ENCODE measurements at regions of chr20 and their contacts with region 1.

Region 1: DNA sequence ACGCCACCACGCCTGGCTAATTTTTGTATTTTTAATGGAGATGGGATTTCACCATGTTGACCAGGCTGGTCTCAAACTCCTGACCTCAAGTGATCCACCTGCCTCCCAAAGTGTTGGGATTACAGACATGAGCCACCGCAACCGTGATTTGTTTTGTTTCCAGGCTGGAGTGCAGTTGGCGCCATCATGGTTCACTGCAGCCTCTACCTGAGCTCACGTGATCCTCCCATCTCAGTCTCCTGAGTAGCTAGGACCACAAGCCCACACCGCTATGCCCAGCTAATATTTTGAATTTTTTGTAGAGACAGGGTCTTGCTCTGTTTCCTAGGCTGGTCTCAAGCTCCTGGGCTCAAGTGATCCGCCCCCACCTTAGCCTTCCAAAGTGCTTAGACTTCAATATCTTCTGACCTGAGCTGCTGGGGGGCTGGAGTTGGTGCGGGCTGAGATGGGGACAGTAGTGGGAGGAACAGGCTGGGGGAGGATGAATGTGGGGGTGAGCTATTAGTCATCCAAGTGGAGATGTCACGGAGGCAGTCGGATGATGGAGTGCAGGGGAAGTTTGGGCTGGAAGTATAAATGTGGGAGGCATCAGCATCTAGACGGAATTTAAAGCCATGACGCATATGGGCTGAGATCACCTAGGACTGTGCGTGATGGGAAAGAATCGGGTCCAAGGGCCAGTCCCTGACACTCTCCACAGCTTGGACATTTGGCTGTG is 23.1 kb upstream of the ZMYND8 start:
- DNase-seq: peak in 1 of 2 donors; percentile 58
- H3K4me3 ChIP-seq: no peak overlapping the region
- H3K27ac ChIP-seq: no peak overlapping the region
- H3K4me1 ChIP-seq: peaks cover 5 to 18% (median 12%) of the 10 kb centered on the region in 4 donors
- H3K27me3 ChIP-seq: no peaks in the 10 kb centered on the region
- CTCF ChIP-seq: no peak
- EP300 ChIP-seq: no peak
- POLR2A ChIP-seq: no peak

Region 2: DNA sequence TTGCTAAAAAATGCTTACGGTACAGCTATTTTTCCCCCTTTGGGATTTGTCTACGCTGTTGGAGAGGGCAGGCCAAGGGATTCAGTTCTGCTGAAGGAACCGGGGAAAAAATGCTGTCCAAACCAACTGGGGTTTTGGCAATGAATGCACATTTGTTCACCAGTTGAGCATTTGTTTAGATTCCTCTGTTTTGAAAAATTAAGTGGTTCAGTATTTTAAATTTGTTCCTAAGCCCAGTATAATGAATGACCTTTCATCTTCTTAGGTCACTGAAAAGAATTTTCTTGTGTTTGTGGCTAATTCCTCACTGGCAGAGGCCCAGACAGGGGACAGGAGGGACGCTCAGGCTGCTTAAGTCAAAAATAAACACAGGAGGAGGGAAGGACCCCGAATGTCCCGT is 495.7 kb before region 1 on chr20:
- intact Hi-C with region 1: no loop called
- DNase-seq: peak in 1 of 2 donors; percentile 30
- H3K4me3 ChIP-seq: no peak overlapping the region
- H3K27ac ChIP-seq: no peak overlapping the region
- H3K4me1 ChIP-seq: peaks cover 0 to 9% (median 0%) of the 10 kb centered on the region in 4 donors
- H3K27me3 ChIP-seq: peaks cover 0 to 8% (median 0%) of the 10 kb centered on the region in 3 donors
- CTCF ChIP-seq: no peak
- EP300 ChIP-seq: no peak
- POLR2A ChIP-seq: no peak

Region 3: DNA sequence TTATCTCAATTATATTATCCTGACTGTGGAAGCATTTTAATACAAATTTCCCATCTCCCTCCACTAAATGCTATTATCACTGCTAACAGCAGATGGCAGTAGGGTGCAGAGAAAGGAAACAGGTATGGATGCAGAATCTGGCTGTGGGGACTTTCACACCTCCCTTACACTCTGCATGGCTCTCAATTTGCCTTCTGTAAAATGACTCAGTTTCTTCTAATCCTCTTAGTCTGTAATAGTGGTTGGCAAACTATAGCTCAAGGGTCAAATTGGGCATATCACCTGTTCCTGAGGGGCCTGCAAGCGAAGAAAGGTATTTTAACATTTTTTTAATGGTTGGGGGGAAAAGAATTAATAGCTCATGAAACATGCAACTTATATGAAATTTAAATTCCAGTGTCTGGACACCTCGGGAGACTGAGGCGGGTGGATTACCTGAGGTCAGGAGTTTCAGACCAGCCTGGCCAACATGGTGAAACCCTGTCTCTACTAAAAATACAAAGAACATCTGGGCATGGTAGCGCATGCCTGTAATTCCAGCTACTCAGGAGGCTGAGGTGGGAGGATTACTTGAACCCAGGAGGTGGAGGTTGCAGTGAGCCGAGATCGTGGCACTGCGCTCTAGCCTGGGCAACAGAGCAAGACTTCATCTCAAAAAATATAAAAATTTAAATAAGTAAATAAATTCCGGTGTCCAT is 106.5 kb before region 1 on chr20:
- intact Hi-C with region 1: loop called (anchors 5 kb)
- DNase-seq: peak; percentile 38 to 88
- H3K4me3 ChIP-seq: no peak overlapping the region
- H3K27ac ChIP-seq: peak overlapping the region in 4 of 5 donors; percentile 63 to 87 (median 84)
- H3K4me1 ChIP-seq: peaks cover 35 to 59% (median 45%) of the 10 kb centered on the region in 4 donors
- H3K27me3 ChIP-seq: no peaks in the 10 kb centered on the region
- CTCF ChIP-seq: peak in 5 of 7 experiments; percentile 69 to 99 (median 85)
- EP300 ChIP-seq: no peak
- POLR2A ChIP-seq: no peak

Region 4: GRCh38 chr20:47296950-47297349 is 82.6 kb before region 1 on chr20:
- intact Hi-C with region 1: loop called (anchors 10 kb)
- DNase-seq: peak in 1 of 2 donors; percentile 54
- H3K4me3 ChIP-seq: no peak overlapping the region
- H3K27ac ChIP-seq: no peak overlapping the region
- H3K4me1 ChIP-seq: peaks cover 0 to 12% (median 7%) of the 10 kb centered on the region in 4 donors
- H3K27me3 ChIP-seq: no peaks in the 10 kb centered on the region
- CTCF ChIP-seq: peak in 1 of 7 experiments; percentile 5
- EP300 ChIP-seq: no peak
- POLR2A ChIP-seq: no peak

Region 5: DNA sequence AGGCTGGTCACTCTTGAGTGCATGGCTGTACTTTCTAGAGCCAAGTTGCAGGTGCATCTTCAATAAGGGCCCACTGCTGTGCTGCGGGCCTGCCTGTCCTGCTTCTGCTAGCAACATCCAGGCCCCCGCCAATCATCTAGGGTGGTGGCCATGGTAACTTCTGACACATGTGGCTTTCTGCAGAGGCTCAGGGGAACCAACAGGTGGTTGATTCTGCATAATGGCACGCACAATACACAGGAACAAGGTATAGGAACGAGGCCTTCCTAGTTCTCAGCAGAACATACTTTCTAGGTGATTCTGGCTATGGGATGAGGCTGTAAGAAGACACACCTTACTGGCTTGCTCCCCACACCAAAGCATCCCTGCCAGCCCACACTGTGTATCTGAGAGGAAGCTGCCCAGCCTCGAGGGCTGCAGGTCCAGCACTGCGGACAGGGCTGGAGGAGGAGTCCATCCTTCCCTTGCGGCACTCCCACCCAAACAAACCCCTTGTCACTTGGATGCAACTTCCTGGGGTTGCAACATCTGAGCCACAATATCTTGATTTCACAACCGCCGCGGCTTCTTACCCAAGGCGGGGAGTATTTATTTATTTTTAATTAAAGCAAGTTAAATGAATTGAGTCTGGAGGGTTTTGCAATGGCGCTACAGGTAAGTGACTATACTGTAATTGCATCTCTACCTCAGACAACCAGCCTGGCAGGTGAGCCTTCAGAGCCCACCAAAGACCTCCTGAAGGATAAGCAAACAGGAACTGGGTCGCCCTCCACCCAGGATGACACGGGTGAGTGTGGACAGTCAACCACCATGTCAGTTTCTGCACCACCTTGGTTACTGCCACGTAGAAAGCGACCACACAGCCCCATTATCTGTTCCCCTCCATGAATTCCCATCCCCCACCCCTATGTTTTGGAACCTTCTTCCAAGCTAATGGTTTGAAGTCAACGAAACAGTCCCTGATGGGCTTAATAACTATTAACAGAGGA is 356.1 kb after region 1 on chr20:
- intact Hi-C with region 1: no loop called
- DNase-seq: peak in 1 of 2 donors; percentile 45
- H3K4me3 ChIP-seq: no peak overlapping the region
- H3K27ac ChIP-seq: peak overlapping the region in 1 of 5 donors; percentile 21
- H3K4me1 ChIP-seq: peaks cover 0 to 5% (median 0%) of the 10 kb centered on the region in 4 donors
- H3K27me3 ChIP-seq: no peaks in the 10 kb centered on the region
- CTCF ChIP-seq: no peak
- EP300 ChIP-seq: no peak
- POLR2A ChIP-seq: no peak